ENCODE measurements at regions of chr12 and their contacts with region 1.

Region 1: DNA sequence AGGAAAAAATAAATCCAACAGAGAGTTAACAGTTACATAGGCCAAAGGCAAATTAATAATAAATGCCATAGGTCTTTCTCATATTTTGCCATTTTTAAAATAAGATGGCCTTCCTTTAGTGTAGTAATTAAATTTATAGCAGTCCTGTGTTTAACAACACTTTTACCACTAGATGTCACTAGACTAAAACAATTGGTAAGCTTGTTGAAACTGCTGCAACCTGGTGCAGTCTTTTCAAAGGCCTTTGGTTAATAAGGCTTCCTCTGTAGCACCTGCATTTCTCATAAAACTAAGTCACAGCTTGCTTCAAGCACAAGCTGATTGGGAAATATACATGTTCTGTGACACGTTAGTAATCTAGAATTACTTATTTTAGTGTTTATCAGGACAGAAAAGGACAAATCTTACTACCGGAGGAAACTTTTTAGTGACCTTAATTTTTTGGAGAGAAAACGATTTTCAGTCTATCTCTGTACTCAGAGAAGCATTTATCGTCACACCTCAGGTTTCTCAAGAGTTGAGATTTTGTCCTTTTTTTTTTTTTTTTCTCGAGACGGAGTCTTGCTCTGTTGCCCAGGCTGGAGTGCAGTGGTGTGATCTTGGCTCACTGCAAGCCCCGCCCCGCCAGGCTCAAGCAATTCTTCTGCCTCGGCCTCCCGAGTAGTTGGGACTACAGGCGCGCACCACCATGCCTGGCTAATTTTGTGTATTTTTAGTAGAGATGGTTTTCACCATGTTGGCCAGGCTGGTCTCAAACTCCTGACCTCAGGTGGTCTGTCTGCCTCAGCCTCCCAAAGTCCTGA is 20.0 kb downstream of the BORCS5 start:
- DNase-seq: peak in 3 of 9 experiments; percentile 37 to 87 (median 76)
- ATAC-seq: peak; percentile 39
- H3K4me3 ChIP-seq: no peak overlapping the region
- H3K4me3 Mint-ChIP-seq: no peak overlapping the region
- H3K27ac ChIP-seq: no peak overlapping the region
- H3K27ac Mint-ChIP-seq: peak overlapping the region; percentile 60
- H3K4me1 ChIP-seq: peaks cover 21% of the 10 kb centered on the region
- H3K4me1 Mint-ChIP-seq: peaks cover 37% of the 10 kb centered on the region
- H3K27me3 ChIP-seq: no peaks in the 10 kb centered on the region
- H3K27me3 Mint-ChIP-seq: no peaks in the 10 kb centered on the region
- CTCF ChIP-seq: peak; percentile 79

Region 2: DNA sequence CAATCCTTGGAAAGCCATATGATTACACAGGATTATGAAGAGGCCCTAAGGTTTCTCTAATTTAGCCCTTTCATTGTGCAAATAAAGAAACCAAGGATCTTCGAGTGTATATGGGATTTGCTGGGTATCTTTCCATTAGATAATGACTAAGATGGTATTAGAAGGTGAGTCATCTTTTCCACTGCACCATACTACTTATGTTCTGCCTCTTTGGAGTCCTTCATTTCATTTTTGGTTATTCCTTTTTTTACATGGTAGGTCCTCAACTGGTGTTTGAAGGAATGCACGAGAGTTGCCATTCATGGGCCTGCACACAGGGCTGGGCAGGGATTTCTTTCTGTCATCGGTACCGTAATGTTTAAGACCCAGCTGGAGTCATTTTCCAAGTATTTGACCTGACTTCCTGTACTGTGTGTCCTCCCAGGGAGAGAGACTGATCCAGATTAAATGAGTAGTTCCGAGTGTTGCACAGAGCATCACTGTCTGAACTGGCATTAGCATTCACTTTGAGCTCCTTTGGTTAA is 65.8 kb after region 1 on chr12:
- CTCF ChIA-PET with region 1: interaction called, 4 read pairs
- POLR2A ChIA-PET with region 1: interaction called, 6 read pairs
- intact Hi-C with region 1: loop called (anchors 1 to 2 kb)
- DNase-seq: peak in 2 of 9 experiments; percentile 33 to 62
- ATAC-seq: peak; percentile 0
- H3K4me3 ChIP-seq: no peak overlapping the region
- H3K4me3 Mint-ChIP-seq: peak overlapping the region; percentile 51
- H3K27ac ChIP-seq: peak overlapping the region; percentile 66 to 89
- H3K27ac Mint-ChIP-seq: peak overlapping the region; percentile 92
- H3K4me1 ChIP-seq: peaks cover 44% of the 10 kb centered on the region
- H3K4me1 Mint-ChIP-seq: peaks cover 72% of the 10 kb centered on the region
- H3K27me3 ChIP-seq: no peaks in the 10 kb centered on the region
- H3K27me3 Mint-ChIP-seq: no peaks in the 10 kb centered on the region
- CTCF ChIP-seq: no peak

Region 3: DNA sequence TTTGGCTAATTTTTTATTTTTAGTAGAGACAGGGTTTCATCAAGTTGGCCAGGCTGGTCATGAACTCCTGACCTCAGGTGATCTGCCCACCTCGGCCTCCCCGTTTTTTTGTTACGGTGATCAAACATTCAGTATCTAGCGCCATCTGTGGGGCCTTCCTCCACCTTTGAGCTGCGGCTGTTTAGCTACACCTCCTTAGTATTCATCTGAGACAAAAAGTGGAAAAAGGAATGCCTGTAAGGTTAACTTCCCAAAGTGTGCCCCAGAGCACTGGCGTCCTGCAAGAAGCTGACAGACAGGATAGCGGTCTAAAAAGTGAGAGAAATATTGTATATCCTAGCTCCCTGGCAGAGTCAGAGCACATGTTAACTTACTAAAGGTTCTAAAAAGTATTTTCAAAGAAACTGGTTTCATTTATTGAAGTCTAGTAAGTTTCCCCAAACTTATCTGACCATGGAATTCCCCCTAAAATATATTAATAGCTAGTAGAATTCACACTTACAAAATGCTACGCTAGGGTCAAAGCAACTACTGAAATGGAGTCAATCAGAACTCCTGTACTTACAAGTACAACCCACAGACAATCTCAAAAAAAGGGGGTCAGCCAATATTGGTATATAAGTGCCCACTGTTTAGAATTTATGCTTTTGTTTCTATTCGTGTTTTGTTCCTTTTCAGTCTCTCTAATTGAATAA is 126.7 kb after region 1 on chr12:
- CTCF ChIA-PET with region 1: interaction called, 6 read pairs
- POLR2A ChIA-PET with region 1: no interaction called
- intact Hi-C with region 1: loop called (anchors 1 to 5 kb)
- DNase-seq: peak in 3 of 9 experiments; percentile 20 to 64 (median 54)
- ATAC-seq: peak; percentile 39
- H3K4me3 ChIP-seq: no peak overlapping the region
- H3K4me3 Mint-ChIP-seq: no peak overlapping the region
- H3K27ac ChIP-seq: no peak overlapping the region
- H3K27ac Mint-ChIP-seq: peak overlapping the region; percentile 83
- H3K4me1 ChIP-seq: no peaks in the 10 kb centered on the region
- H3K4me1 Mint-ChIP-seq: peaks cover 52% of the 10 kb centered on the region
- H3K27me3 ChIP-seq: no peaks in the 10 kb centered on the region
- H3K27me3 Mint-ChIP-seq: no peaks in the 10 kb centered on the region
- CTCF ChIP-seq: no peak

Region 4: DNA sequence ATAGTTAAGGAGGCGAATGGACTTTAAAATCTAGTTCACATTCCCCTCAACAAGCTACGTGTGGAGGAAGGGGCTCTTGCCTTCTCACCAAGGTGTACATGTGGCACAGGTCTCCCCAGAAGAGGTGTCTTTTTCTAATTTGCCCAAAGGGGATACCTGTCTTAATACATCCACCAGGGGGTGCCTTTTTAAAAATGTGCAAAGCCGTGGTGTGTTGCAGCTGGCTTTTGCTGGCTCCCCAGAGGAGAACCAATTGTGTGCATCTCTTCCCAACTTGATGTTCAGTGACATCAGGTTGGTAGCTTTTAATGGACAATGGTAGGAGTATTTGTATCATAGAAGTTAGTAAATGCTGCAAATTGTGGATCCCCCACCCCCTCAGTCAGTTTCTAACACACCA is 268.6 kb after region 1 on chr12:
- CTCF ChIA-PET with region 1: interaction called, 14 read pairs
- POLR2A ChIA-PET with region 1: no interaction called
- intact Hi-C with region 1: no loop called
- DNase-seq: peak in 8 of 9 experiments; percentile 9 to 79 (median 48)
- ATAC-seq: peak; percentile 97
- H3K4me3 ChIP-seq: no peak overlapping the region
- H3K4me3 Mint-ChIP-seq: no peak overlapping the region
- H3K27ac ChIP-seq: no peak overlapping the region
- H3K27ac Mint-ChIP-seq: peak overlapping the region; percentile 50
- H3K4me1 ChIP-seq: no peaks in the 10 kb centered on the region
- H3K4me1 Mint-ChIP-seq: peaks cover 5% of the 10 kb centered on the region
- H3K27me3 ChIP-seq: no peaks in the 10 kb centered on the region
- H3K27me3 Mint-ChIP-seq: no peaks in the 10 kb centered on the region
- CTCF ChIP-seq: peak; percentile 64

Region 5: GRCh38 chr12:12696562-12697383 is 319.9 kb after region 1 on chr12:
- CTCF ChIA-PET with region 1: interaction called, 4 read pairs
- POLR2A ChIA-PET with region 1: no interaction called
- intact Hi-C with region 1: loop called in 1 of 2 experiments (anchors 2 kb)
- DNase-seq: peak; percentile 87 to 96 (median 94)
- ATAC-seq: peak; percentile 84
- H3K4me3 ChIP-seq: peak overlapping the region; percentile 42 to 88
- H3K4me3 Mint-ChIP-seq: peak overlapping the region; percentile 93
- H3K27ac ChIP-seq: peak overlapping the region; percentile 96 to 100
- H3K27ac Mint-ChIP-seq: peak overlapping the region; percentile 100
- H3K4me1 ChIP-seq: peaks cover 20% of the 10 kb centered on the region
- H3K4me1 Mint-ChIP-seq: peaks cover 29% of the 10 kb centered on the region
- H3K27me3 ChIP-seq: no peaks in the 10 kb centered on the region
- H3K27me3 Mint-ChIP-seq: no peaks in the 10 kb centered on the region
- CTCF ChIP-seq: no peak

Region 6: GRCh38 chr12:12736759-12737676 is 360.2 kb after region 1 on chr12:
- CTCF ChIA-PET with region 1: interaction called, 53 read pairs
- POLR2A ChIA-PET with region 1: interaction called, 4 read pairs
- intact Hi-C with region 1: loop called (anchors 1 kb)
- DNase-seq: peak in 7 of 9 experiments; percentile 31 to 86 (median 62)
- ATAC-seq: peak; percentile 80
- H3K4me3 ChIP-seq: peak overlapping the region; percentile 47 to 51
- H3K4me3 Mint-ChIP-seq: peak overlapping the region; percentile 73
- H3K27ac ChIP-seq: peak overlapping the region; percentile 55 to 80
- H3K27ac Mint-ChIP-seq: peak overlapping the region; percentile 96
- H3K4me1 ChIP-seq: peaks cover 25% of the 10 kb centered on the region
- H3K4me1 Mint-ChIP-seq: peaks cover 35% of the 10 kb centered on the region
- H3K27me3 ChIP-seq: no peaks in the 10 kb centered on the region
- H3K27me3 Mint-ChIP-seq: no peaks in the 10 kb centered on the region
- CTCF ChIP-seq: peak; percentile 80